ENCODE measurements at regions of chr9 and their contacts with region 1.

Region 1: GRCh38 chr9:32627394-32627944 is 8.0 kb downstream of the TAF1L start:
- DNase-seq: no peak
- H3K4me3 ChIP-seq: no peak overlapping the region
- H3K27ac ChIP-seq: no peak overlapping the region
- H3K4me1 ChIP-seq: no peaks in the 10 kb centered on the region
- H3K27me3 ChIP-seq: no peaks in the 10 kb centered on the region
- CTCF ChIP-seq: no peak
- POLR2A ChIP-seq: no peak

Region 2: GRCh38 chr9:32825203-32825602 is 197.7 kb after region 1 on chr9:
- intact Hi-C with region 1: loop called (anchors 5 kb)
- DNase-seq: no peak
- H3K4me3 ChIP-seq: no peak overlapping the region
- H3K27ac ChIP-seq: no peak overlapping the region
- H3K4me1 ChIP-seq: no peaks in the 10 kb centered on the region
- H3K27me3 ChIP-seq: no peaks in the 10 kb centered on the region
- CTCF ChIP-seq: no peak
- POLR2A ChIP-seq: no peak

Measured in uterus (tissue), 4 donors.